A549 (cell line): ENCODE measurements at regions of chr13 and their contacts with region 1.

Region 1: GRCh38 chr13:111474136-111475002 is 153.9 kb downstream of the TEX29 start:
- DNase-seq: peak; percentile 31 to 58
- ATAC-seq: peak; percentile 58 to 88; a peak in 4 of 6 replicates
- H3K4me3 ChIP-seq: no peak overlapping the region
- H3K27ac ChIP-seq: no peak overlapping the region
- H3K4me1 ChIP-seq: no peaks in the 10 kb centered on the region
- CTCF ChIP-seq: peak; percentile 47
- EP300 ChIP-seq: no peak
- POLR2A ChIP-seq: no peak
- RAD21 ChIP-seq: peak; percentile 66 to 68

Region 2: DNA sequence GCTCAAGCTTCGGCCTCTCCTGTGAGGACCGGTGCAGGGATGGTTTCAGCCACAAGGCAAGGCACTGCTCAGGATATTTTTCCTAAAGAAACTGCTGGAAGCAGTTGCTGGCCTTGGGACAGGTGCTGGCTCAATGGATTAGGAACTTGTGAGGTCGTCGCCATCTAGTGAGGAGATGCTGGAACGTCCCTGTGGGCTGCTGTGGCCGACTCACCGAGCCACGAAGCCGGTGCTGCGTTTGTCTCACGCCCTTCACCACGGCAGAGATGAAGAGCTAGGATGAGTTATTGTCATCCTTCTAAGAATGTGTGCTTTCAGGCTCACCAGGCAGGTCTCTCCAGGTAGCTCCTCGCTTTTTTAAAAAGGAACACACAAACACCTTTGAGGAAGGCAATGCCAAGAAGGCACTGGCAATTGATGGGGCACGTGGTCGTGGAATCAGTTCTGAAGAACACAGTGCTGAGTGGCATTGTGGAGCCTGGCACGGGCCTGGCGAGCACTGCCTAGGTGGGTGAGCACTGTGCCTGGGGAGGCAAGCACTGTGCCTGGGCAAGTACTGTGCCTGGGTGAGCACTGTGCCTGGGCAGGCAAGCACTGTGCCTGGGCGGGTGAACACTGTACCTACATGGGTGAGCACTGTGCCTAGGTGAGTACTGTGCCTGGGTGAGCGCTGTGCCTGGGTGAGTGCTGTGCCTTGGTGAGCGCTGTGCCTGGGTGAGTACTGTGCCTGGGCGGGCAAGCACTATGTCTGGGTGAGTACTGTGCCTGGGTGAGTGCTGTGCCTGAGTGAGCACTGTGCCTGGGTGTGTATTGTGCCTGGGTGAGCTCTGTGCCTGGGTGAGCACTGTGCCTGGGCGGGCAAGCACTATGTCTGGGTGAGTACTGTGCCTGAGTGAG is 13.6 kb before region 1 on chr13:
- CTCF ChIA-PET with region 1: interaction called, 11 read pairs
- POLR2A ChIA-PET with region 1: no interaction called
- DNase-seq: peak; percentile 6 to 32
- ATAC-seq: peak; percentile 81 to 88; a peak in 5 of 6 replicates
- H3K4me3 ChIP-seq: no peak overlapping the region
- H3K27ac ChIP-seq: no peak overlapping the region
- H3K4me1 ChIP-seq: no peaks in the 10 kb centered on the region
- CTCF ChIP-seq: peak; percentile 22; the same call in 1 of the 3 replicates
- EP300 ChIP-seq: no peak
- POLR2A ChIP-seq: no peak
- RAD21 ChIP-seq: peak; percentile 34 to 48; a peak in 3 of 5 replicates

Region 3: DNA sequence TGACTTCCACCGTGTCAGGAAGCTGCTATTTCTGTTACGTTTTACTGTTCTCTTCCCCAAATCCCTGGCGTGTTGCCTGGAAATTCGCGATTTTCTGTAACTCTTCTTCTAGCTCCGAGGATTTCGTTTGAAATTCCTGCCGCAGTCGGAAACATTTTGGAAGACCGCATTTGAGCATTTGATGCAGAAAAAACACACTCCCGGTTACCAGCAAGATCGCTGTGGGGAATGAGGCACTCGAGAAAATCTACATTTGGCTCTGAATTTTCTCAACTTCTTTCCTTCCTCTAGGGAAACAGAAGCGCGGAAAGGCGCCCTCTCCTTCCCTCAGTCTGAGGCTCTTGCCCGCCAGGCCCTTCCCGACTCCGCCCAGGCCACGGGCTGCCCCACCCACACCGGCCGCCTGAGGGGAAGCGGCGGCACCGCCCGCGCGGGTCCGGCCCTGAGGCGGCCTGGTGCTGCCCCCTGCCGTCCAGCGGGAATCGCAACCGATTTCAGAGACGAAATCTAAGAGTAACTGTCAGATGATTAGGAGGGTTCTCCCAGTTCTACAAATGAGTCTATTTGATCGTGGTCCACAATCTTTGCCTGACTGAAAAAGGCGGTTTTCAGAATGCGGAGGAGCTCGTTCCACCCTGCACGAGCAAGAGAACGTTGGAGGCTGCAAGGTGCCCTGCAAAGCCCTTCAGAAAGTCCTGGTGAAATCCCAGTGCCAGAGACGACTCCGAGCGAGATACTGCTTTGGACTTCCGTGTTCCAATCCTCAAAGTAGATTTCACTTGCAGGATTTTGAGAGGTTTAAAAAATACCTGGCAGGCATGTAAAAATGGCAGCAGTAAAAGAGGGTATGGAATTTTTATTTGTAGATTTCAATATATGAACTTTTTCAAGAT is 1132.0 kb after region 1 on chr13:
- CTCF ChIA-PET with region 1: interaction called, 16 read pairs
- POLR2A ChIA-PET with region 1: no interaction called
- DNase-seq: peak; percentile 53 to 76
- ATAC-seq: peak; percentile 100
- H3K4me3 ChIP-seq: peak overlapping the region; percentile 47
- H3K27ac ChIP-seq: peak overlapping the region; percentile 55 to 81
- H3K4me1 ChIP-seq: no peaks in the 10 kb centered on the region
- CTCF ChIP-seq: peak; percentile 83
- EP300 ChIP-seq: no peak
- POLR2A ChIP-seq: no peak
- RAD21 ChIP-seq: peak; percentile 78 to 89